ENCODE measurements at regions of chr2 and their contacts with region 1.

Region 1: DNA sequence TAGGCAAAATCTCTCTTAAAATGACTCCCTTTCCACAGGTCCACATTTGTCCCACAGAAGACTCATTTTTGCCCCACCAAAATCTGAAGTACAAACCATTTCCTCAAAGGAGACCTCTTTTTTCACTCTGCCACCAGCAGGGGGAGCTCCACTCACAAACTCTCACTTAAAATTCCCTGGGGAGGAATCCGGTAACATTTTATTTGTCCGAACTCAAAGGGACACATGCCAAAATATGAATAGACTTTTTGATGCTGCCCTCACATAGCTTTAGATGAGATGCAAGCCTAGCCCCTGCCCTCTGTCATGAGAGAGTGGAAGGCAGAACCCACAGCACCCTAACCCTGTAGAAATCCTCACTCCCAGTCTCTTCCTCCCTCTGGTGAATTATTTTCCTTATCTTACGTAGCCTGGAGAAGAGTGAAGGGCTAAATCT is 57.1 kb downstream of the RMDN2 start:
- DNase-seq: no peak
- H3K4me3 ChIP-seq: peak overlapping the region; percentile 16
- CTCF ChIP-seq: peak; percentile 54

Region 2: GRCh38 chr2:37993143-37993542 is 11.0 kb after region 1 on chr2:
- CTCF ChIA-PET with region 1: interaction called, 19 read pairs
- POLR2A ChIA-PET with region 1: no interaction called
- DNase-seq: no peak
- H3K4me3 ChIP-seq: no peak overlapping the region
- CTCF ChIP-seq: no peak

Region 3: GRCh38 chr2:38037757-38038621 is 55.8 kb after region 1 on chr2:
- CTCF ChIA-PET with region 1: no interaction called
- POLR2A ChIA-PET with region 1: no interaction called
- DNase-seq: no peak
- H3K4me3 ChIP-seq: peak overlapping the region; percentile 33
- CTCF ChIP-seq: peak; percentile 32

Region 4: DNA sequence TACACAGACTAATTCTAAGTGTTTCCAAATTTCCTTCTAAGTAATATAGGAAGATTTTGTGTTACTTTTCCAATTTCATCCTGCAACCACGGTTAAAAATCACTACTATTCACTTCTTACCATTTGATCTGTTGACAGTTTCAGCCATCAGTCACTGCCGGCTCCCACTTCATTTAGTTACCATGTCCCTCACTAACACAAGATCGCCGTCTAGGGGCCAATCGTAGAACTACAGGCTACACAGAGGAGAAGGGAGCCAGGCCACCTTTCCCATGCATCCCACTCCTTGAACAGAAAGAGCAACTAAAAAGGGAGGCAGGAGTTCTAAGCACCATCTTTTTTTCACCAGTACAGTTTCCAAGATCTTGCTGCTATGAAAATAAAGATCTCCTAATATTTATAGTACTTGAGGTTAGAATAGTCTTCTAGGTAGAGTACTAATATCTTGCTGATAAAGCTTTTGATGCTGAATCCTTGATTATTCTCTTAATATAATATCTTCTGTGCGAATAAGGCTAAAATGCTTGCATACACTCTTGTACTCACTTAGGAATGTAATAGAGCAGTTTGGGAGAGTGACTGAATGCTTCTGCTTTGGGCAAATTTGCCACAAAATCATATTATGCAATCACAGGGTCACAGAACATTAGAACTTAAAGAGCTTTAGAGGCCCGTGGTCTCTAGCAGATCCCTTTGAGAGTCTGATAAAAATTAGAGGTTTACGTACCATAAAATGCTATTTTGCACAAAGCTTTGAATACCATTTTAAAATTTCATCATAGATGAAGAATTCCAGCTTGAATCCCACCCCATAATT is 133.3 kb after region 1 on chr2:
- CTCF ChIA-PET with region 1: interaction called, 17 read pairs
- POLR2A ChIA-PET with region 1: no interaction called
- DNase-seq: no peak
- H3K4me3 ChIP-seq: no peak overlapping the region
- CTCF ChIP-seq: peak; percentile 82